ENCODE measurements at regions of chr1 and their contacts with region 1.

Region 1: GRCh38 chr1:150321826-150322166 is 463 bp downstream of the PRPF3 start:
- DNase-seq: no peak
- ATAC-seq: no peak
- H3K4me3 ChIP-seq: peak overlapping the region; percentile 55 to 92 (median 77)
- H3K27ac ChIP-seq: peak overlapping the region; percentile 35 to 96 (median 91)
- H3K4me1 ChIP-seq: peaks cover 0 to 28% (median 11%) of the 10 kb centered on the region in 12 donors
- H3K27me3 ChIP-seq: no peaks in the 10 kb centered on the region
- CTCF ChIP-seq: no peak
- POLR2A ChIP-seq: no peak

Region 2: DNA sequence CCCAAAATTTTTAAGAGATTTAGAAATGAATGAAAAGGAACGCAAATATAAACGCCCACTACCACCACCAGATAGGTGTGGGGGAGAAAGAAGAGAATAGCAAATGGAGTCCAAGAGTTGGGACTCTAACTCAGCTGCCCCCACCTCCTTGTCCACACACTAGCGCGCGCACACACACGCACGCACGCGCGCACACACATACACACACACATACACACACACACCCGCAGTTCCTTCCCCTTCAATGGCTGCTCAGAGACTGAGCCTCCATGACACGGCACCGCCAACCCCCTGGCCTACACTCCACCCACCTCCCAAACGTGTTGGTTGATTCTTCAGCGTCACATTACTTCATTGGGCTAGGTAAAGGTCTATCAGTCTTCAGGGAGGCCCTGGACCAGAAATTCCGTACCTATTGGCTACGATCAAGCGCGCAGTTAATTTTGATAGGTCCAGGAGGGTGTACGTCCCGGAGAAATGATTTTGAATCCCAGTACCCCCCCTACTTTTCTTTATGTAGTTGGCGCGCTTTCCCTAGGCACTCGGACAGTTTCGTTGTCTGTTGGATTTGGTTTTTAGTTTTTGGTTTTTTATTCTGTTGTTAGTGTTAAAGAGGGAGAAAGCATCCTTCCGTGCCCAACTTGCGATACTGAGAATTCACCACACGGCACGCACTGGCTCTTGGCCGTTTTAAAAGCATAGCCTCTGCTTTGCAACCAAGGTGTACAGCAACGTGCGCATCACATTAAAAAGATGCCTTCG is 85.8 kb before region 1 on chr1 and contains the start of gene ANP32E:
- intact Hi-C with region 1: loop called in 1 of 10 experiments (anchors 5 kb)
- DNase-seq: peak; percentile 94 to 97 (median 96)
- ATAC-seq: peak; percentile 96 to 99 (median 98)
- H3K4me3 ChIP-seq: peak within 1 kb of the TSS; percentile 78 to 99 (median 96)
- H3K27ac ChIP-seq: peak within 1 kb of the TSS; percentile 83 to 100 (median 98)
- H3K4me1 ChIP-seq: peaks cover 0 to 18% (median 11%) of the 10 kb centered on the region in 12 donors
- H3K27me3 ChIP-seq: no peaks in the 10 kb centered on the region
- CTCF ChIP-seq: peak in 4 of 12 donors; percentile 5 to 33 (median 12)
- POLR2A ChIP-seq: peak in 1 of 2 donors; percentile 80
- total RNA-seq, gene ANP32E: 12.6 to 59.9 (median 33.6) TPM

Region 3: GRCh38 chr1:150259758-150260669 is 61.8 kb before region 1 on chr1:
- intact Hi-C with region 1: loop called in 3 of 10 experiments (anchors 5 to 10 kb)
- DNase-seq: peak in 3 of 5 donors; percentile 32 to 68 (median 43)
- ATAC-seq: peak; percentile 35 to 74 (median 54)
- H3K4me3 ChIP-seq: peak overlapping the region in 2 of 12 donors; percentile 15 to 16
- H3K27ac ChIP-seq: peak overlapping the region in 7 of 12 donors; percentile 2 to 77 (median 46)
- H3K4me1 ChIP-seq: peaks cover 0 to 38% (median 20%) of the 10 kb centered on the region in 12 donors
- H3K27me3 ChIP-seq: peaks cover 0 to 22% (median 0%) of the 10 kb centered on the region in 9 donors
- CTCF ChIP-seq: no peak
- POLR2A ChIP-seq: no peak

Region 4: GRCh38 chr1:150281837-150282653 is 39.8 kb before region 1 on chr1 and contains the start of gene CIART:
- intact Hi-C with region 1: loop called in 1 of 10 experiments (anchors 1 kb)
- DNase-seq: peak; percentile 90 to 97 (median 95)
- ATAC-seq: peak; percentile 96 to 98 (median 97)
- H3K4me3 ChIP-seq: peak within 1 kb of the TSS; percentile 44 to 98 (median 63)
- H3K27ac ChIP-seq: peak within 1 kb of the TSS; percentile 82 to 98 (median 93)
- H3K4me1 ChIP-seq: peaks cover 0 to 34% (median 21%) of the 10 kb centered on the region in 12 donors
- H3K27me3 ChIP-seq: no peaks in the 10 kb centered on the region
- CTCF ChIP-seq: no peak
- POLR2A ChIP-seq: no peak
- total RNA-seq, gene CIART: 2.3 to 23.9 (median 7.1) TPM

Region 5: DNA sequence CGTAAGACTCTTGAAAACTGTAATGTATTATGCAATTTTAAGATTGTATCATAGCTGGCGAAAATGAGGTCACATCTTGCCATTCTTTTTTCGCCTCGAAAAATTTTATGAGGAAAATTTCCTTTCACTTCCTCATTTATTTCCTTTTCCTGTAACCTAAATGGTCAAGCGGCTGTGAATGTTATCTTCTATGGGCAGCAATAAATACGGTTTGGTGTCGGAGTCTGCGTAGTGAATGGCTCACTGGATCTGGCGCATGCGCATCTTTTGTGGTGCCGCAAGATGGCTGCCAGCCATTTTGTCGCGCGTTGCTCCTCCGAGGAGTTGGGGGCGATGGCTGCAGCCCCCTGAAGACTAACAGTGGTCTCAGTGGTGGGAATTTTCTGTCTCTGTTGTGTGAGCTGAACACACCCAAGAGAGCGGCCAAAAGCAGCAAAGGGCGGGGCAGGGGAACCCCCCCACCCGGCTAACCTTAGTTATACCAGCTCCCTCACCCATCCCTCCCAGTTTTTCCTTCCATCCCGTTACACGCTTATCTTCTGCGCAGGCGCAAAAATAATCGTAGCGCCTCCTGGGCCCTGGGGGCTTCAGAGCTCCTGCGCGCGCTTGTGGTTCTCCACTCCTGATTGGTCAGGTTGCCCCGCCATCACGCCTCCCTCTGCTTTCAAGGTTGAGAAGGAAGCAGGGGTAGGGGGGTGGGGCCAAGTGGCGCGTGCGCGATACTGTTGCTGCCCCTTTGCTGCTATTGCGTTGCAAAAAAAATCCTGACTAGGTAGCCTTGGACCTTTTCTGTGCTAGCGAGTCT is 41.8 kb after region 1 on chr1 and contains the start of gene RPRD2:
- intact Hi-C with region 1: loop called in 1 of 10 experiments (anchors 5 kb)
- DNase-seq: peak; percentile 99 to 100 (median 100)
- ATAC-seq: peak; percentile 98 to 99 (median 99)
- H3K4me3 ChIP-seq: peak within 1 kb of the TSS; percentile 27 to 91 (median 72)
- H3K27ac ChIP-seq: peak within 1 kb of the TSS; percentile 92 to 99 (median 98)
- H3K4me1 ChIP-seq: peaks cover 0 to 28% (median 14%) of the 10 kb centered on the region in 12 donors
- H3K27me3 ChIP-seq: no peaks in the 10 kb centered on the region
- CTCF ChIP-seq: peak in 1 of 12 donors; percentile 11
- POLR2A ChIP-seq: peak in 1 of 2 donors; percentile 62
- total RNA-seq, gene RPRD2: 19.4 to 33.4 (median 25.3) TPM